Spleen (tissue), 13 donors: ENCODE measurements at regions of chr19 and their contacts with region 1.

Region 1: GRCh38 chr19:10112895-10113591 is 1.6 kb downstream of the P2RY11 start:
- DNase-seq: peak; percentile 89
- H3K4me3 ChIP-seq: peak overlapping the region in 5 of 8 donors; percentile 19 to 60 (median 25)
- H3K27ac ChIP-seq: peak overlapping the region; percentile 35 to 87 (median 63)
- H3K4me1 ChIP-seq: peaks cover 22 to 100% (median 59%) of the 10 kb centered on the region in 6 donors
- H3K27me3 ChIP-seq: no peaks in the 10 kb centered on the region
- CTCF ChIP-seq: peak; percentile 36 to 74 (median 66)
- POLR2A ChIP-seq: no peak

Region 2: DNA sequence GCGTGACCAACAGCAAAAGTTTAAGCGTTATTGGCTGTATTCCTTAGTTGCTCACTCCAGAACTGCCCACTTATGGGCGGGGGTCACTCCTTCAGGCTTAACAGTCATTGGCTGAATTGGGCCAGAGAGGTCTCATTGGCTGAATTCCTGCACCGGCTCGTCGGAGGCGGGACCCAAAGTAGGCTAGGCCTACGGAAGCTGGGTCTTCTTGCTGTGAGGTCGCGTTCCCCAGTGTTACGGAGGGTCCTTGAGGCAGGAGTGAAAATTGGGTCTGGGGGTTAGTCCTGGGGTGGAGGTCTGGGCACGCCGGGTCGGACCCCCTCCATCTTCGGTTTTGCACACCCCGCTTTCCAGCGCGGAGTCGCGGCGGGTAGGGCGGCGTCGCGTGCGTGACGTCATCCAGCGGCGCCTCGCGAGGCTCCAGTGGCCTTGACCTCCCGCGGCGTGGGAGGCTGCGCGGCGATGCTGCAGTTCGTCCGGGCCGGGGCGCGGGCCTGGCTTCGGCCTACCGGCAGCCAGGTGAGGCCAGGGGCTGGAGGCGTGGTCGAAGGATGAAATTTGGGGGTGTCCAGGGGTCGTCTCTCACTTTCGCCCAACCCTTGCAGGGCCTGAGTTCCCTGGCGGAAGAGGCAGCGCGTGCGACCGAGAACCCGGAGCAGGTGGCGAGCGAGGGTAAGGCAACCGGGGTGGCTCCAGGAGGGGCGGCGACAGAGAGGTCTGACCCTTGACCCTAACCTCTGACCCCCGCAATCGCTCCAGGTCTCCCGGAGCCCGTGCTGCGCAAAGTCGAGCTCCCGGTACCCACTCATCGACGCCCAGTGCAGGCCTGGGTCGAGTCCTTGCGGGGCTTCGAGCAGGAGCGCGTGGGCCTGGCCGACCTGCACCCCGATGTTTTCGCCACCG is 139.0 kb after region 1 on chr19 and contains the start of gene MRPL4:
- intact Hi-C with region 1: loop called (anchors 10 kb)
- DNase-seq: peak; percentile 97
- H3K4me3 ChIP-seq: peak within 1 kb of the TSS; percentile 76 to 97 (median 93)
- H3K27ac ChIP-seq: peak within 1 kb of the TSS; percentile 70 to 95 (median 92)
- H3K4me1 ChIP-seq: peaks cover 11 to 39% (median 29%) of the 10 kb centered on the region in 6 donors
- H3K27me3 ChIP-seq: no peaks in the 10 kb centered on the region
- CTCF ChIP-seq: peak in 3 of 11 experiments; percentile 4 to 13 (median 12)
- POLR2A ChIP-seq: peak in 2 of 3 donors; percentile 51 to 64
- total RNA-seq, gene MRPL4: 32.7 to 52.3 (median 37.2) TPM